ENCODE measurements at regions of chr12 and their contacts with region 1.

Region 1: DNA sequence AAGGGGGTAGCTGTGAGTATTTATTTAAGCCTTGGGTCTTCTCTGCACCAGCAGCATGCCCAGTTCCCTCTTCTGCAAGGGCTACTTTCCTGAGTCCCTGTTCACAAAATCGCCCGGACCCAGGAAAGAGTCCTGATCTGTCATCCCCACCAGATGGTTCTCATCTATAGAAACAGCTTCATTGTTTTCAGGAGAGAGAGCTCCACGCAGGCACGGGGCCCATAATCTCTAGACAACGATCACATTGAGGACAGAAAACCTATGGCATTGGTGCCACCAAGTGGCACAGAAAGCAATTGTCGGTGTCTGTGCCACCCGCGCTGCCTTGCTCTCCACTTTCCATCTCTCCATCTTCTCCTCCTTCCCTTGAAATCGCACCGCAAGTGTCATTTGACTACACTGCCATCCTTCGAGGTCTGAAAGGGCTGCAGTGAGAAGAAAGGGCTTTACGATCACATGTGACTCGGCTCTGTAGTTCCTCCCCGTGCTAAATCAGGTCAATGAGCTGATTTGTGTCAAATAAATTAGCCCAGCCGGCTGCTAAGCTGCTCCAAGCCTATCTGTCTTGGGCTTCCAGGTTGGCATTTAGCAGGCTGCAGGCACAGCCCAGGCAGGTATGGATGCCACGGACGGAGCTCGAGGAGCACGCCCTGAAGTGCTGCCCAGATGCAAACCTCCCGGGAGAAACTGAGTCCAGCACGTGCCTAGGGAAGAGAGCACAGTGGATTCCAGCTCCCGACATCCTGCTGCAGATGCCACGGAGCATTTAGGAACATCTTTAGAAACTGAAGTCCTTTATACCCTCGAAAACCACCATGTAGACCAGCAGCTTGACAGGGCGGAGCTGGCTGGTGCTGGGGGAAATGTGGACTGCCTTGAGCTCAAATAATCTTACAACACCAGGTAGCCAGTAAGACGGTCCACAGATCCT is 28.8 kb downstream of the SPRING1 start:
- DNase-seq: peak in 4 of 5 donors; percentile 41 to 49 (median 42)
- H3K4me3 ChIP-seq: no peak overlapping the region
- H3K4me3 Mint-ChIP-seq: peak overlapping the region in 6 of 8 donors; percentile 35 to 81 (median 72)
- H3K27ac ChIP-seq: no peak overlapping the region
- H3K27ac Mint-ChIP-seq: peak overlapping the region in 1 of 7 donors; percentile 57
- H3K4me1 ChIP-seq: peaks cover 11% of the 10 kb centered on the region
- H3K4me1 Mint-ChIP-seq: peaks cover 8 to 13% (median 10%) of the 10 kb centered on the region in 4 donors
- H3K27me3 ChIP-seq: peaks cover 5% of the 10 kb centered on the region
- H3K27me3 Mint-ChIP-seq: peaks cover 1 to 2% of the 10 kb centered on the region in 2 donors

Region 2: GRCh38 chr12:115998119-115998633 is 710.9 kb before region 1 on chr12:
- CTCF ChIA-PET with region 1: interaction called, 15 read pairs
- POLR2A ChIA-PET with region 1: no interaction called
- intact Hi-C with region 1: loop called (anchors 1 kb)
- DNase-seq: peak in 4 of 5 donors; percentile 34 to 39 (median 36)
- H3K4me3 ChIP-seq: no peak overlapping the region
- H3K4me3 Mint-ChIP-seq: no peak overlapping the region
- H3K27ac ChIP-seq: no peak overlapping the region
- H3K27ac Mint-ChIP-seq: peak overlapping the region in 3 of 7 donors; percentile 22 to 60 (median 46)
- H3K4me1 ChIP-seq: no peaks in the 10 kb centered on the region
- H3K4me1 Mint-ChIP-seq: peaks cover 6 to 17% (median 9%) of the 10 kb centered on the region in 4 donors
- H3K27me3 ChIP-seq: no peaks in the 10 kb centered on the region
- H3K27me3 Mint-ChIP-seq: no peaks in the 10 kb centered on the region

Region 3: DNA sequence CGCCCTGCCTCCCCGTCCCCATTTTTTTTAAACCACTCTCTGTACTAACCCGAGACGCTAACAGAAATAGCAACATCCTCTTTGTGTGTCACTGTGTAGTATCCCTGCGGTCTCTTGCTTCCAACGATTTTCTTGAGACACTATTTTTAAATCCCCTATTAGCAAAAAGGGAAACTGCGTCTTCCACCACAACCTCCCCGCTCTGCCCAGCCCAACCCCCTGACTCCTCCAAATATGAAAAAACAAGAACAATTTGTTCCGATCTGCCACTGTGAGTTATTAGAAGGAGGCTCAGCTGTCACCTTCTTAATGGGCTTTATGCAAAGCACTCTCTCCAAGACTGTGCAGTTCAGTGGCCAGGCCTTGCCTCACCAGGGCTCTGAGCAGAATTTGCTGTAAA is 73.6 kb before region 1 on chr12:
- CTCF ChIA-PET with region 1: no interaction called
- POLR2A ChIA-PET with region 1: no interaction called
- intact Hi-C with region 1: no loop called
- DNase-seq: no peak
- H3K4me3 ChIP-seq: no peak overlapping the region
- H3K4me3 Mint-ChIP-seq: no peak overlapping the region
- H3K27ac ChIP-seq: no peak overlapping the region
- H3K27ac Mint-ChIP-seq: no peak overlapping the region
- H3K4me1 ChIP-seq: no peaks in the 10 kb centered on the region
- H3K4me1 Mint-ChIP-seq: no peaks in the 10 kb centered on the region
- H3K27me3 ChIP-seq: no peaks in the 10 kb centered on the region
- H3K27me3 Mint-ChIP-seq: peaks cover 24 to 29% of the 10 kb centered on the region in 2 donors

Region 4: DNA sequence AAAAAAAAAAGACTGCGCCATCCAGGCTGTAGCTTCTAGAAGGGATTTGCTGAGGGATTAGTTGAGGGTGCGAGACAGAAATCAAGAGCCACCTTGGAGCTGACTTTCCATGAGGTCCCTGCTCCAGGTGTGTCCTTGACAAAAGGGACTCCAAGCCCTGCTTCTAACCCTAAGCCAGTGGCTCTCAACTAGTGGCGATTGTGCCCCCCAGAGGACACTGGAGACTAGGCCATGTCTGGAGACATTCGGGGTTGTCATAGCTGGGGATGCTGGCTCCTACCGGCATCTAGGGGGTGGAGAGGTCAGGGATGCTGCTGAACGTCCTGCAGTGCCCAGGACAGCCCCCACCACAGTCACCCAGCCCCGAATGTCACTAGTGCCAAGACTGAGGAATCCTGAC is 11.8 kb before region 1 on chr12:
- CTCF ChIA-PET with region 1: interaction called, 25 read pairs
- POLR2A ChIA-PET with region 1: no interaction called
- intact Hi-C with region 1: no loop called
- DNase-seq: no peak
- H3K4me3 ChIP-seq: no peak overlapping the region
- H3K4me3 Mint-ChIP-seq: no peak overlapping the region
- H3K27ac ChIP-seq: no peak overlapping the region
- H3K27ac Mint-ChIP-seq: no peak overlapping the region
- H3K4me1 ChIP-seq: no peaks in the 10 kb centered on the region
- H3K4me1 Mint-ChIP-seq: peaks cover 0 to 5% (median 1%) of the 10 kb centered on the region in 4 donors
- H3K27me3 ChIP-seq: peaks cover 5% of the 10 kb centered on the region
- H3K27me3 Mint-ChIP-seq: peaks cover 21 to 22% of the 10 kb centered on the region in 2 donors

Region 5: DNA sequence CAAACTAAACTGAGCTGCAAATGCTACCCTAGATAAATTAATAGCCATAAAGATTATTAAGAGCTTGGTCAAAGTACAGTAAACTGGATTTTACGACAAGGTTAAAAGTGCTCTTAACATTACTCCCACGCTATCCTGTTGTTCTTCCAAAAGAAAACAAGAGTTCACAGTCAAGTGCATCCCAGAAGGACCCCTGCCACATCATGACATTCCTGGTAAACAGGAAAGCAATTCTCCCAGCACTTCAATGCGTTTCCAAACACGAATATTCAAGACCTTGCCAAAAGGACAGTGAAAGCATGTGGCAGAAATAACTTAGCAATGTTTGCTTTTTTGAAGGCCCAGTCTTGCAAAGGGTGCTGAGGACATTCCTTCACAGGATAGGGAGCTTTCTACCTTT is 17.6 kb after region 1 on chr12:
- CTCF ChIA-PET with region 1: interaction called, 24 read pairs
- POLR2A ChIA-PET with region 1: no interaction called
- intact Hi-C with region 1: no loop called
- DNase-seq: no peak
- H3K4me3 ChIP-seq: no peak overlapping the region
- H3K4me3 Mint-ChIP-seq: no peak overlapping the region
- H3K27ac ChIP-seq: no peak overlapping the region
- H3K27ac Mint-ChIP-seq: no peak overlapping the region
- H3K4me1 ChIP-seq: no peaks in the 10 kb centered on the region
- H3K4me1 Mint-ChIP-seq: peaks cover 19 to 35% (median 28%) of the 10 kb centered on the region in 4 donors
- H3K27me3 ChIP-seq: no peaks in the 10 kb centered on the region
- H3K27me3 Mint-ChIP-seq: no peaks in the 10 kb centered on the region

Region 6: GRCh38 chr12:116955382-116956021 is 246.4 kb after region 1 on chr12:
- CTCF ChIA-PET with region 1: interaction called, 18 read pairs
- POLR2A ChIA-PET with region 1: no interaction called
- intact Hi-C with region 1: no loop called
- DNase-seq: peak; percentile 35 to 45 (median 36)
- H3K4me3 ChIP-seq: no peak overlapping the region
- H3K4me3 Mint-ChIP-seq: no peak overlapping the region
- H3K27ac ChIP-seq: no peak overlapping the region
- H3K27ac Mint-ChIP-seq: no peak overlapping the region
- H3K4me1 ChIP-seq: peaks cover 3% of the 10 kb centered on the region
- H3K4me1 Mint-ChIP-seq: peaks cover 3 to 10% (median 7%) of the 10 kb centered on the region in 4 donors
- H3K27me3 ChIP-seq: no peaks in the 10 kb centered on the region
- H3K27me3 Mint-ChIP-seq: no peaks in the 10 kb centered on the region